ENCODE measurements at regions of chr16 and their contacts with region 1.

Region 1: DNA sequence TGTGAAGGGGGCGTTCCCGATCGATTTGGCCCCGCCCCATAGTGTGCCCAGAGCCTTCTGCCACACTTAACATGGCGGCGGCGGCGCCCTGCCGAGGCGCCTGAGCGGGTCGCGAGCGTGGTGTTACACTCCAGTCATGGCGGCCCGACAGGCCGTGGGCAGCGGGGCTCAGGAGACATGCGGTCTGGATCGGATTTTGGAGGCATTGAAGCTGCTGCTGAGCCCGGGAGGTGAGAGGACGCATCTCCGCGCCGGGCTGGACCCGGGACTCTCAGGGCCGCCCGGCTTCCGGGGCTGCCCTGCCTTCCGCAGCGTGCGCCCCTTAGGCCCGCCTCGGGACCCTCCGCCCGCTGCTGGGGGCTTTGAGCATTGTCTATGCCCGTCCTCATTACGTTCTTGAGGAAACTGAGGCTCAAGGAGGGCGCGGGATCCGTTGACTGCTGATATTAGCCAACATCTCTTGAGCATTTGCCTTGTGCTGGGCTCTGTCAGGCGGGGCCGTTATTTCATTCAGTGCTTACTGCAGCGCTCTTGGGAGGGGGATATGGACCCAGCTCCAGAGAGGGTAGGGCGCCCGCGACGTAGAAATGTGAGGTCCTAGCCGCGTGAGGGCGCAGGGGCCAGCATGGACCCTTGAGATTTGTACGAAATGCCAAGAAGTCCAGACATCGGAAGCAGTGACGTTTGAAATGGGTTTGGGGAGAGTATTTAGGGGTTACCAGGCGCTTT is at the start of gene TANGO6:
- DNase-seq: peak; percentile 91
- H3K4me3 ChIP-seq: peak within 1 kb of the TSS; percentile 72
- H3K27ac ChIP-seq: peak within 1 kb of the TSS; percentile 93
- H3K4me1 ChIP-seq: peaks cover 7% of the 10 kb centered on the region
- H3K27me3 ChIP-seq: no peaks in the 10 kb centered on the region
- CTCF ChIP-seq: peak; percentile 64
- total RNA-seq, gene TANGO6: 15.8 and 18.0 TPM in 2 replicates

Region 2: GRCh38 chr16:69017036-69017783 is 173.6 kb after region 1 on chr16:
- CTCF ChIA-PET with region 1: interaction called, 10 read pairs
- POLR2A ChIA-PET with region 1: no interaction called
- intact Hi-C with region 1: no loop called
- DNase-seq: peak; percentile 22
- H3K4me3 ChIP-seq: no peak overlapping the region
- H3K27ac ChIP-seq: no peak overlapping the region
- H3K4me1 ChIP-seq: no peaks in the 10 kb centered on the region
- H3K27me3 ChIP-seq: no peaks in the 10 kb centered on the region
- CTCF ChIP-seq: no peak